ENCODE measurements at regions of chr22 and their contacts with region 1.

Region 1: DNA sequence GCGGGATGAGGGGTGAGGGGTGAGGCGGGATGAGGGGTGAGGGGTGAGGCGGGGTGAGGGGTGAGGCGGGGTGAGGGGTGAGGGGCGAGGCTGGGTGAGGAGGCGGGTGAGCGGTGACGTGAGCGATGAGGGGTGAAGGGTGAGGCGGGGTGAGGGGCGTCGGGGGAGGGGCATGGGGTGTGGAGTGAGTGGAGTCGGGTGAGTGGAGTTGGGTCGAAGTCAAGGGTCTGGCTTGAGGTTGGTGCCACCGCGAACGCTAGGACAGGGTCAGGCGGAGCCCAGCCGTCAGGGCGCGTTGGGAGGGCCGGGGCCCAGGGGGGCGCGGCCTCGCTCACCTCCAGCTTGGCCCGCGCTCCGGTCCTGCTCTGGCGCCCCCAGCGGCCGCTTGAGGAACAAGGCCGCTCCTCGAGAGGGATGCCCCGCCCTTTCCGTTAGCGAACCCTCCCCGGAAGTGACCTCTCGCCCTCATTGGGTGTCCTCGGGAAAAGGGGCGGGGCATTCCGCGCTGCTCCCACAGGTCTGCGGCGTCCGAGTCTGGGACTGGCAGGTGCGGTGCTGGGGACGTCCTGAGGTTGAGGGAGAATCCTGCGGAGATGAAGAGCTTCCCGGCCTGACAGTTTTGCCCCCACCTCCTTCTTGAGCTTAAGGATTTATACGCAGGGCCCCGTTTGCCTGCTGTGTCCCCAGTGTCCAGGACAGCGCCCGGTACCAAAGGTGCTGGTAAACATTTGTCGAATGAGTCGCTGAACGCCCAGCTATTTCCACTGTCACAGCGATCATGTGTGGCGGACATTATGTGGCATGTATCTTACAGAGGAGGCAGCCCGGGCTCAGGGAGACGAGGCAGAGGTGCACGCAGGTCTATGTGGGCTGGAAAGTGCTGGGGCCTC is at the start of gene SYCE3:
- DNase-seq: peak; percentile 92 to 99 (median 96)
- ATAC-seq: peak; percentile 100
- H3K4me3 ChIP-seq: peak within 1 kb of the TSS; percentile 75
- H3K4me3 Mint-ChIP-seq: peak within 1 kb of the TSS; percentile 85 to 97 (median 94)
- H3K27ac ChIP-seq: peak within 1 kb of the TSS; percentile 67
- H3K27ac Mint-ChIP-seq: peak within 1 kb of the TSS; percentile 77 to 96 (median 87)
- H3K4me1 ChIP-seq: peaks cover 0 to 4% of the 10 kb centered on the region in 2 donors
- H3K4me1 Mint-ChIP-seq: peaks cover 6 to 24% (median 14%) of the 10 kb centered on the region in 7 donors
- H3K27me3 ChIP-seq: no peaks in the 10 kb centered on the region
- H3K27me3 Mint-ChIP-seq: peaks cover 0 to 14% (median 0%) of the 10 kb centered on the region in 5 donors
- total RNA-seq, gene SYCE3: not detected

Region 2: GRCh38 chr22:50136581-50137015 is 426.2 kb before region 1 on chr22:
- CTCF ChIA-PET with region 1: no interaction called
- POLR2A ChIA-PET with region 1: no interaction called
- intact Hi-C with region 1: no loop called
- DNase-seq: no peak
- ATAC-seq: no peak
- H3K4me3 ChIP-seq: no peak overlapping the region
- H3K4me3 Mint-ChIP-seq: no peak overlapping the region
- H3K27ac ChIP-seq: no peak overlapping the region
- H3K27ac Mint-ChIP-seq: no peak overlapping the region
- H3K4me1 ChIP-seq: no peaks in the 10 kb centered on the region
- H3K4me1 Mint-ChIP-seq: peaks cover 0 to 3% (median 0%) of the 10 kb centered on the region in 7 donors
- H3K27me3 ChIP-seq: no peaks in the 10 kb centered on the region
- H3K27me3 Mint-ChIP-seq: peaks cover 12 to 40% (median 21%) of the 10 kb centered on the region in 5 donors

Region 3: DNA sequence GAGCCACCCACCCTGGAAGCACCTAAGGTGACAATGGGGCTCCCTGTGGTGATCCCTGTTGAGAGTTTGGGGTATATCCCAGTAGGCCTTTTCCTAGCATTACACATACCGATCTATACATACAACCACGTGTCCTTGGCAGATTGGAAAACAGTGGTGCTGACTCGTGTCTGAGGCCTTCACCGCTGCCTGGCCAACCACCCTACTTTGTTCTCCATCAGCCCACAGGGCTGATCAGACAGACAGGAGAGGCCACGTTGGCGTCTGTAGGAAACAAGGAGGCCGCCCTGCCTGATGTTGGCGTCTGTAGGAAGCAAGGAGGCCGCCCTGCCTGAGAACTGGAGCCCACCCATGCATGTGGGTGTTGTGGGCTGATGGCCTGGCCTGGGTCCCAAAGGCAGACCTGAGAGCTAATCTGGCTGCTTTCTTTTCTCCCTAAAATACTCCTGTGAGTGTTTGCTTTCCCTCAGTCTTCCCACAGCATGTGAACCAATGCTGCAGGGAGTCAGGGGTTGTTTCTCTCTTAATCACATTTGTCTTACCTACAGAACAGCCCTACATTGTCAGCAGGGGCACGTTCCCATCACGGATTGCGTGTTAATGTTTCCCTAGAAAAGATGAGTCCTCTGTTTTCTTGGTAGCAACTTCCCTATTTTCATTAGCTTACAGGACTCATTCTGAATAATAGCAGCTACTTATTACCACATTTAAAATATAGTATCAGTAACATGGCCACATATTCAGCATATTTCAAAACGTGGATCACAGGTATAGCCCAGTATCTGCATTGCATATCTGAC is 145.2 kb before region 1 on chr22:
- CTCF ChIA-PET with region 1: no interaction called
- POLR2A ChIA-PET with region 1: no interaction called
- intact Hi-C with region 1: no loop called
- DNase-seq: no peak
- ATAC-seq: no peak
- H3K4me3 ChIP-seq: no peak overlapping the region
- H3K4me3 Mint-ChIP-seq: no peak overlapping the region
- H3K27ac ChIP-seq: no peak overlapping the region
- H3K27ac Mint-ChIP-seq: no peak overlapping the region
- H3K4me1 ChIP-seq: no peaks in the 10 kb centered on the region
- H3K4me1 Mint-ChIP-seq: peaks cover 0 to 10% (median 0%) of the 10 kb centered on the region in 7 donors
- H3K27me3 ChIP-seq: no peaks in the 10 kb centered on the region
- H3K27me3 Mint-ChIP-seq: no peaks in the 10 kb centered on the region

Region 4: DNA sequence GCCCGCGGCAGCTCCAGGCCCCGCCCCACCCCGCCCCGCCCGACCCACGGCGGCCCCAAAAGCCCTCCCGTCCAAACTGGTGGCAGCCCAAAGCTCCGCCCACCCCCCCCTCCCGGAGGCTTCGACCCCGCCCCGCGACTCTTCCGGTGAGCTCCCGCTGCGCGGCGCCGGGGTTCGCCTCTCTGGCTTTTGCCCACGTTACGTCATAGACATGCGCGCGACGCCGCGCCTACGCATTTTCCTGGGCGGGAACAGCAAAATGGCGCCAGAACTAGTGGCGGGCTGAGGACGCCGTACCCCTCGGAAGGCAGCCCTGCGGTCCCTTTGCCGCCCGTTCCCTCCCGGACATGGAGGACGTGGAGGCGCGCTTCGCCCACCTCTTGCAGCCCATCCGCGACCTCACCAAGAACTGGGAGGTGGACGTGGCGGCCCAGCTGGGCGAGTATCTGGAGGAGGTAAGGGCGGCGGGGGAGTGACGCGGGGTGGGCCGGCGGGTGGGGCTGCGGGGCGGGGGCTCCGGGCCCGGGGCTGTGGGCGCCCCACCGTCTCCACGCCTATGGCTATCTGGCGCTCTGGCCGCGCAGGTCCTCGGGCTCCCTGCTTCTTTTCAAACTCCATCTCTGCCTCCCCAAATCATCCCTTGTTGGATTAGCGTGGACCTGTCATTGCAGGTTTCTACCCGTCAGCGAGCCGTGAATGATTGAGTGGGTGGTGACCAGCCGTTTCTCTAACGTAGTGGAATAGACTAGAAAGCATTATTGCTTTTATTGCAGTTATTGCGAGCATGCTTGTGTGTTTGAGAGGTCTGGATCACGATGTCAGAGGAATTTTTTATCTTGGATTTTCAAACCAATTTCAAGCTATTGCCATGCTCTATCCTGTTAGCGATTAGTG is 54.5 kb before region 1 on chr22 and contains the start of gene NCAPH2:
- CTCF ChIA-PET with region 1: no interaction called
- POLR2A ChIA-PET with region 1: interaction called, 10 read pairs
- intact Hi-C with region 1: loop called (anchors 1 kb)
- DNase-seq: peak; percentile 95 to 99 (median 97)
- ATAC-seq: peak; percentile 86
- H3K4me3 ChIP-seq: peak within 1 kb of the TSS; percentile 91
- H3K4me3 Mint-ChIP-seq: peak within 1 kb of the TSS; percentile 88 to 97 (median 94)
- H3K27ac ChIP-seq: peak within 1 kb of the TSS; percentile 99
- H3K27ac Mint-ChIP-seq: peak within 1 kb of the TSS; percentile 89 to 99 (median 98)
- H3K4me1 ChIP-seq: peaks cover 19 to 26% of the 10 kb centered on the region in 2 donors
- H3K4me1 Mint-ChIP-seq: peaks cover 14 to 33% (median 27%) of the 10 kb centered on the region in 7 donors
- H3K27me3 ChIP-seq: no peaks in the 10 kb centered on the region
- H3K27me3 Mint-ChIP-seq: no peaks in the 10 kb centered on the region
- total RNA-seq, gene NCAPH2: 74.3 to 135 (median 91.1) TPM

Region 5: GRCh38 chr22:50530877-50531545 is 31.8 kb before region 1 on chr22:
- CTCF ChIA-PET with region 1: interaction called, 11 read pairs
- POLR2A ChIA-PET with region 1: interaction called, 24 read pairs
- intact Hi-C with region 1: loop called (anchors 1 kb)
- DNase-seq: peak in 7 of 9 donors; percentile 46 to 85 (median 57)
- ATAC-seq: peak; percentile 60
- H3K4me3 ChIP-seq: peak overlapping the region; percentile 86
- H3K4me3 Mint-ChIP-seq: peak overlapping the region; percentile 80 to 96 (median 87)
- H3K27ac ChIP-seq: peak overlapping the region; percentile 84
- H3K27ac Mint-ChIP-seq: peak overlapping the region; percentile 67 to 100 (median 90)
- H3K4me1 ChIP-seq: peaks cover 5 to 14% of the 10 kb centered on the region in 2 donors
- H3K4me1 Mint-ChIP-seq: peaks cover 0 to 49% (median 30%) of the 10 kb centered on the region in 7 donors
- H3K27me3 ChIP-seq: no peaks in the 10 kb centered on the region
- H3K27me3 Mint-ChIP-seq: peaks cover 0 to 5% (median 0%) of the 10 kb centered on the region in 5 donors

Region 6: GRCh38 chr22:50544078-50544745 is 18.6 kb before region 1 on chr22:
- CTCF ChIA-PET with region 1: interaction called, 7 read pairs
- POLR2A ChIA-PET with region 1: interaction called, 16 read pairs
- intact Hi-C with region 1: loop called (anchors 1 to 2 kb)
- DNase-seq: peak; percentile 60 to 80 (median 71)
- ATAC-seq: peak; percentile 63
- H3K4me3 ChIP-seq: peak overlapping the region; percentile 67
- H3K4me3 Mint-ChIP-seq: peak overlapping the region; percentile 53 to 77 (median 70)
- H3K27ac ChIP-seq: peak overlapping the region; percentile 45
- H3K27ac Mint-ChIP-seq: peak overlapping the region in 6 of 9 donors; percentile 49 to 93 (median 75)
- H3K4me1 ChIP-seq: peaks cover 33 to 40% of the 10 kb centered on the region in 2 donors
- H3K4me1 Mint-ChIP-seq: peaks cover 31 to 59% (median 36%) of the 10 kb centered on the region in 7 donors
- H3K27me3 ChIP-seq: no peaks in the 10 kb centered on the region
- H3K27me3 Mint-ChIP-seq: no peaks in the 10 kb centered on the region

Region 7: GRCh38 chr22:50599786-50600455 is 37.2 kb after region 1 on chr22:
- CTCF ChIA-PET with region 1: no interaction called
- POLR2A ChIA-PET with region 1: interaction called, 3 read pairs
- intact Hi-C with region 1: loop called in 1 of 2 experiments (anchors 1 kb)
- DNase-seq: peak; percentile 43 to 81 (median 66)
- ATAC-seq: peak; percentile 89
- H3K4me3 ChIP-seq: no peak overlapping the region
- H3K4me3 Mint-ChIP-seq: peak overlapping the region; percentile 19 to 79 (median 54)
- H3K27ac ChIP-seq: no peak overlapping the region
- H3K27ac Mint-ChIP-seq: no peak overlapping the region
- H3K4me1 ChIP-seq: peaks cover 0 to 4% of the 10 kb centered on the region in 2 donors
- H3K4me1 Mint-ChIP-seq: peaks cover 6 to 18% (median 12%) of the 10 kb centered on the region in 7 donors
- H3K27me3 ChIP-seq: peaks cover 5 to 6% of the 10 kb centered on the region in 2 donors
- H3K27me3 Mint-ChIP-seq: peaks cover 19 to 51% (median 28%) of the 10 kb centered on the region in 5 donors